ENCODE measurements at regions of chr15 and their contacts with region 1.

Region 1: GRCh38 chr15:68924866-68925560 is 5.3 kb upstream of the SPESP1 start:
- DNase-seq: peak; percentile 88
- ATAC-seq: peak; percentile 96
- H3K4me3 Mint-ChIP-seq: no peak overlapping the region
- H3K27ac Mint-ChIP-seq: peak overlapping the region; percentile 1
- H3K4me1 Mint-ChIP-seq: peaks cover 5% of the 10 kb centered on the region; the same call in 1 of the 2 replicates
- H3K27me3 Mint-ChIP-seq: peaks cover 8% of the 10 kb centered on the region
- CTCF ChIP-seq: peak; percentile 72

Region 2: GRCh38 chr15:68650901-68651709 is 273.9 kb before region 1 on chr15:
- CTCF ChIA-PET with region 1: interaction called, 12 read pairs
- POLR2A ChIA-PET with region 1: no interaction called
- DNase-seq: peak; percentile 98
- ATAC-seq: peak; percentile 96
- H3K4me3 Mint-ChIP-seq: peak overlapping the region; percentile 53
- H3K27ac Mint-ChIP-seq: no peak overlapping the region; the same call in 1 of the 2 replicates
- H3K4me1 Mint-ChIP-seq: peaks cover 43% of the 10 kb centered on the region
- H3K27me3 Mint-ChIP-seq: no peaks in the 10 kb centered on the region
- CTCF ChIP-seq: peak; percentile 97

Region 3: GRCh38 chr15:68730471-68730919 is 194.5 kb before region 1 on chr15:
- CTCF ChIA-PET with region 1: interaction called, 19 read pairs
- POLR2A ChIA-PET with region 1: no interaction called
- DNase-seq: peak; percentile 39
- ATAC-seq: peak; percentile 71
- H3K4me3 Mint-ChIP-seq: no peak overlapping the region
- H3K27ac Mint-ChIP-seq: no peak overlapping the region
- H3K4me1 Mint-ChIP-seq: peaks cover 17% of the 10 kb centered on the region
- H3K27me3 Mint-ChIP-seq: peaks cover 3% of the 10 kb centered on the region; the same call in 1 of the 2 replicates
- CTCF ChIP-seq: no peak

Region 4: DNA sequence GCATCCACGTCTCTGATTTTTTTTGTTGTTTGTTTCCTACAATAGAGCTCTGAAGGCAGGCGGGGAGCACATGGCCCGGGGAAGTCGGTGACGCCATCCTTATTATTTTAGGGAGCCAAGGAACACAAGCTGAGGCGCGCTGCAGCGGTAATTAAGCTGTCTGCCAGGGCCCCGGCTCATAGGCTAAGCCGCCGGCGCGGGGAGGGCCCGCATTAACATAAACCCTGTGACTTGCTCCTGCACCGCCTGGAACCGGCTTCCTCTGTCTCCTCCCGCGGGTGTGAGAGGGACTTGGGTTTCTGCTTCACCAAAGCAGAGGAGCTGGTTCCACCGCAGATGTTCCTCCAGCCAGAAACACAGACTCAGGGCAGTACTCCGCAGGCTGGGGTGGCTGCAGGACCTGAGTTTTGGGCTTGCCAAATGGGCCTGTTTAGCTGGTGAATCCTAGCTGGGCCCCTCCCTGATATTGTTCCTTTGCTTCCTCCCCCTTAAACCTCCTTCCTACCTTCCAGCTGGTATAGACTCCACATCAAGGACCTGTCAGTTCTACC is 129.6 kb before region 1 on chr15:
- CTCF ChIA-PET with region 1: interaction called, 10 read pairs
- POLR2A ChIA-PET with region 1: no interaction called
- DNase-seq: peak; percentile 91
- ATAC-seq: peak; percentile 95
- H3K4me3 Mint-ChIP-seq: peak overlapping the region; percentile 40
- H3K27ac Mint-ChIP-seq: peak overlapping the region; percentile 99
- H3K4me1 Mint-ChIP-seq: peaks cover 90% of the 10 kb centered on the region
- H3K27me3 Mint-ChIP-seq: no peaks in the 10 kb centered on the region
- CTCF ChIP-seq: no peak

Region 5: GRCh38 chr15:68939221-68939900 is 14.3 kb after region 1 on chr15:
- CTCF ChIA-PET with region 1: interaction called, 10 read pairs
- POLR2A ChIA-PET with region 1: no interaction called
- DNase-seq: no peak
- ATAC-seq: no peak
- H3K4me3 Mint-ChIP-seq: no peak overlapping the region
- H3K27ac Mint-ChIP-seq: no peak overlapping the region
- H3K4me1 Mint-ChIP-seq: no peaks in the 10 kb centered on the region
- H3K27me3 Mint-ChIP-seq: no peaks in the 10 kb centered on the region; the same call in 1 of the 2 replicates
- CTCF ChIP-seq: no peak

Region 6: DNA sequence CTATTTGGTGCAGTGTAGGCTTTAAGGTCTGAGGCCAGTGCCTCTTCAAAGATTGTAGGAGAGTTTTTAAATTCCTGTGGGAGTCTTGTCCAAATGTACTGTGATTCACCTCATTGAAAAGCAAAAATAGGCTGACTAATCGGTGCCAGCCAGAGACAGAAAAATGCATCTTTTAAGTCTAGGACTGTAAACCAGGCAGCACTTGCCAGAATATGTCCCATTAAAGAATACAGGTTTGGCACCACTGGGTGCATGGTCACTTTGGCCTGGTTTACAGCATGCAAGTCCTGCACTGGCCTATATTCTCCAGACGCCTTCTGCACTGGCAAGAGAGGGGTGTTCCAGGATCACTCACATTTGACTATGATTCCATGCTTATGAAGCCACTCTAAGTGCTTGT is 69.1 kb after region 1 on chr15:
- CTCF ChIA-PET with region 1: no interaction called
- POLR2A ChIA-PET with region 1: no interaction called
- DNase-seq: no peak
- ATAC-seq: no peak
- H3K4me3 Mint-ChIP-seq: no peak overlapping the region
- H3K27ac Mint-ChIP-seq: no peak overlapping the region
- H3K4me1 Mint-ChIP-seq: peaks cover 39% of the 10 kb centered on the region
- H3K27me3 Mint-ChIP-seq: peaks cover 17% of the 10 kb centered on the region
- CTCF ChIP-seq: no peak

Measured in WTC11 (cell line).